Mammary epithelial cell (primary cell): ENCODE measurements at regions of chr16 and their contacts with region 1.

Region 1: GRCh38 chr16:69443927-69444631 is 19.7 kb downstream of the CYB5B start:
- DNase-seq: peak; percentile 50
- H3K4me3 ChIP-seq: peak overlapping the region; percentile 20 to 27 (median 25)
- H3K27ac ChIP-seq: peak overlapping the region; percentile 59
- H3K4me1 ChIP-seq: peaks cover 19% of the 10 kb centered on the region
- H3K27me3 ChIP-seq: no peaks in the 10 kb centered on the region
- CTCF ChIP-seq: no peak

Region 2: DNA sequence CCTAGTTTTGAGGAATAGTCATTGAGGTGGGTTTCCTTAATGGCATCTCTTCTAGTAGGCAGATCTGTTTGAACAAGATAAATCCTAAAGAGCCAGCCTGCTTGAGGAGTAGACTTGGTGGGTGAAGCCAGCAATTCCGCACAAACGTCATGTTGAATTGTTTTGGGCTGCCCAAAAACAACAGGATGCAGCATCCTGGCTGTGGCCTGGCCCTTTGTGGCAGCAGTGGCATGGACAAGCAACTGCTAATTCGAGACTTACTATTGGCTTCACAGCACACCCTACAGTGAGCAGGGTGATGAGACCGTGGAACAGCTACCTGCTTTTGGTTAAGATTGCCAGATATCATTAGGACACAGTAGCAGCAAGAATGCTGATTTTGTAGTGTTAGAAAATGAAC is 142.2 kb before region 1 on chr16:
- CTCF ChIA-PET with region 1: no interaction called
- dilution Hi-C with region 1: no loop called
- in situ Hi-C with region 1: no loop called
- intact Hi-C with region 1: no loop called
- DNase-seq: no peak
- H3K4me3 ChIP-seq: no peak overlapping the region
- H3K27ac ChIP-seq: no peak overlapping the region
- H3K4me1 ChIP-seq: no peaks in the 10 kb centered on the region
- H3K27me3 ChIP-seq: no peaks in the 10 kb centered on the region
- CTCF ChIP-seq: no peak

Region 3: DNA sequence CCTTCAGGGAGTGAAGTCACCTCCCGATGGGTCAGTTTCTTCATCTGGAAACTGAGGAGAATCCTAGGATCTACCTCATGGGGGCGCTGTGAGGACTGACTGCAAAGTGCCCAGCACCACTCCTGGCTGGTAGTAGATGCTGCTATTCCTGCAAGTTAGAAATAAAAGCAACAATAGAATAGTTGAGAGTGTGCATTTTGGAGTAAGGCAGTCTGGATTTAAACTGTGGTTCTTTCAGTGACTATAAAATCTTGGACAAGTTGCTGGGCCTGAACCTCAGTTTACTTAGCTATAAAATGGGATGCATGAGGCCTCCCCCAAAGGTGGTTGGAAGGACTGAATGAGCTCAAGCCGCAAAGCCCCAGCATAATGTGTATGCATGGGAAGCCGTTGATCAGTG is 50.9 kb after region 1 on chr16:
- CTCF ChIA-PET with region 1: no interaction called
- dilution Hi-C with region 1: loop called (anchors 5 kb)
- in situ Hi-C with region 1: no loop called
- intact Hi-C with region 1: no loop called
- DNase-seq: no peak
- H3K4me3 ChIP-seq: no peak overlapping the region
- H3K27ac ChIP-seq: no peak overlapping the region
- H3K4me1 ChIP-seq: no peaks in the 10 kb centered on the region
- H3K27me3 ChIP-seq: no peaks in the 10 kb centered on the region
- CTCF ChIP-seq: peak; percentile 37 to 56

Region 4: DNA sequence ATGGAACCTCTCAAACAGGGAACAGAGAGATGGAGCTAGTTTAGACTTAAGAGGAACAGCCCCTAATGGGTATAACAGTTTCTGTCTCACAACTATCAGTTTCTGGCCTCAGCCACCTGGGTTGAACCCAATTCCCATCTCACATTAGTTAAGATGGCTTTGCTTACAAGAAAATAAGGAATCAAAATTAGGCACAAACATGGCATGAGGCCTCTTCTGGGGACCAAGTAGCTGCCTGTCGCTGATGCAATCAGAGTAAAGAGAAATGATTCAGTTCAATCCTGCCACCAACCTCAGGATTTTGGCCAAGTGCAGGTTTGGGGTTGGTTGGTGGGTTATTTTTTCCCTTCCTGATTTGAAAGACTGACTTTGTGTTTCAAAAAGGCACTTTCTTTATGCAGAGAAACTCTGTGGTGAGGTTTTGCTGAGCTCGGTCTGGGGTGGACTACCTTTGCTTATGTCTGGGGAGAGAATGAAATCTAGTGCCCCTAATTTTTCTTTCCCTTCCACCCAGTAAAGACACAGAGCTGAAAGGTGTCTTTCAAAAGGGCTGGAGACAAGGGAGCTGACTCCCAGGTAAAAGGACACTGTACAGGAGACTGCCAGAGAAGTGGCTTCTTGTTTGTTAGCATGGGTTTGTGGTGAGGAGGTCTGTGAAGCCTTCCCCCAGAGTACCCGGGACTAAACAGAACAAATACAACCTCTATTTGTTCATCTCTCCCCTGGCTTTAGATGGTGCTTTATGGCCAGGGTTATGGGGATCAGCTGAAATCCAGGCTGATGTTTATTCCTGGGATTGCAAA is 76.9 kb after region 1 on chr16:
- CTCF ChIA-PET with region 1: no interaction called
- dilution Hi-C with region 1: loop called (anchors 5 kb)
- in situ Hi-C with region 1: no loop called
- intact Hi-C with region 1: no loop called
- DNase-seq: no peak
- H3K4me3 ChIP-seq: no peak overlapping the region
- H3K27ac ChIP-seq: no peak overlapping the region
- H3K4me1 ChIP-seq: no peaks in the 10 kb centered on the region
- H3K27me3 ChIP-seq: no peaks in the 10 kb centered on the region
- CTCF ChIP-seq: no peak